Naive thymus-derived CD4-positive, alpha-beta T cell (primary cell): ENCODE measurements at regions of chr12 and their contacts with region 1.

Region 1: DNA sequence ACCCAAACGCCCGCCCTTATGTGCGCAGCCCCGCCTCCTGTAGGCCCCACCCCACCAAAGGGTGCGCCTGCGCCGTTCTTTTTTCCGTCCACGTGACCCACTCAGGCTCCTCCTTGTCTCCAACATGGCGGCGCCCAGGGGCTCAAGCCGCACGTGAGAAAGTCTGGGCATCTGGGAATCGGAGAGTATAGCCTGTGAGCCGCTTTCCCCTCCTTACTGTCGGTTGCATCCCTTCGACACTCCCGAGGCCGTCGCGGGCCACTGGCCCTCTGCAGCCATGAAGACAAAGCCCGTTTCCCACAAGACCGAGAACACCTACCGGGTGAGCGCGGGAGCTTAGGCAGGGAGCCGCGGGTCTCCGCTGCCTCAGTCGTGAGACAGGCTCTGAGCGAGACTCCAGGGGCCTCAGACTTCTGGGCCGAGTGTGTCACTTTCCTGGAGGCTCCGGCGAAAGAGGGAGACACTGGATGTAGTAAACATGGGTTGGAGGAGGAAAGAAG is at the start of gene UTP20:
- DNase-seq: peak; percentile 90 to 94 (median 92)
- ATAC-seq: peak; percentile 100
- H3K4me3 ChIP-seq: peak within 1 kb of the TSS; percentile 72
- H3K4me3 Mint-ChIP-seq: peak within 1 kb of the TSS; percentile 92 to 97 (median 96)
- H3K27ac ChIP-seq: peak within 1 kb of the TSS; percentile 63
- H3K27ac Mint-ChIP-seq: peak within 1 kb of the TSS; percentile 77 to 94 (median 87)
- H3K4me1 ChIP-seq: peaks cover 5% of the 10 kb centered on the region in 2 donors
- H3K4me1 Mint-ChIP-seq: peaks cover 11 to 28% (median 16%) of the 10 kb centered on the region in 7 donors
- H3K27me3 ChIP-seq: no peaks in the 10 kb centered on the region
- H3K27me3 Mint-ChIP-seq: peaks cover 8 to 24% (median 16%) of the 10 kb centered on the region in 5 donors
- total RNA-seq, gene UTP20: 10.8 to 20.8 (median 14.9) TPM

Region 2: GRCh38 chr12:101407436-101408345 is 127.6 kb after region 1 on chr12 and contains the start of gene ARL1:
- CTCF ChIA-PET with region 1: no interaction called
- POLR2A ChIA-PET with region 1: no interaction called
- intact Hi-C with region 1: loop called (anchors 2 to 5 kb)
- DNase-seq: peak; percentile 41 to 85 (median 65)
- ATAC-seq: peak; percentile 88
- H3K4me3 ChIP-seq: peak within 1 kb of the TSS; percentile 97
- H3K4me3 Mint-ChIP-seq: peak within 1 kb of the TSS; percentile 92 to 99 (median 98)
- H3K27ac ChIP-seq: peak within 1 kb of the TSS; percentile 85
- H3K27ac Mint-ChIP-seq: peak within 1 kb of the TSS; percentile 82 to 98 (median 95)
- H3K4me1 ChIP-seq: peaks cover 0 to 15% of the 10 kb centered on the region in 2 donors
- H3K4me1 Mint-ChIP-seq: peaks cover 16 to 45% (median 30%) of the 10 kb centered on the region in 7 donors
- H3K27me3 ChIP-seq: no peaks in the 10 kb centered on the region
- H3K27me3 Mint-ChIP-seq: peaks cover 0 to 11% (median 2%) of the 10 kb centered on the region in 5 donors
- total RNA-seq, gene ARL1: 26.2 to 48.4 (median 39.3) TPM